PC-3 (cell line): ENCODE measurements at regions of chr7 and their contacts with region 1.

Region 1: DNA sequence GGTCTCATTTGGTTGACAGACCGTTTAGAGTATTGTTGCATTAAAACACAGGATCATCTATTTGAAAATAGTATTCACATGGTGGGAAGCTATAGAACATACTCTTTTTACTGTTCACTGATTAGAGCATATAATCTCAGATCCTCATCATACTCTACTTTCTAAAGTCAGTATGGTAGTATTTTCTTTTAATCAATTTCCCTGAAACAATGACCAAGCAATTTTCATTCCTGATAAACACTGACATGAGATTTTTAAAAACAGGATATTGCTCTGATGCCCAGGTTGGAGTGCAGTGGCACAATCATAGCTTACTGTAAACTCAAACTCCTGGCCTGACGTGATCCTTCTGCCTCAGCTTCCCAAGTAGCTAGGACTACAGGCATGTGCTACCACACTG is 63.9 kb downstream of the PTPN12 start:
- DNase-seq: no peak
- ATAC-seq: no peak
- H3K4me3 ChIP-seq: no peak overlapping the region
- H3K27ac ChIP-seq: no peak overlapping the region
- H3K4me1 ChIP-seq: no peaks in the 10 kb centered on the region
- H3K27me3 ChIP-seq: no peaks in the 10 kb centered on the region
- CTCF ChIP-seq: no peak

Region 2: DNA sequence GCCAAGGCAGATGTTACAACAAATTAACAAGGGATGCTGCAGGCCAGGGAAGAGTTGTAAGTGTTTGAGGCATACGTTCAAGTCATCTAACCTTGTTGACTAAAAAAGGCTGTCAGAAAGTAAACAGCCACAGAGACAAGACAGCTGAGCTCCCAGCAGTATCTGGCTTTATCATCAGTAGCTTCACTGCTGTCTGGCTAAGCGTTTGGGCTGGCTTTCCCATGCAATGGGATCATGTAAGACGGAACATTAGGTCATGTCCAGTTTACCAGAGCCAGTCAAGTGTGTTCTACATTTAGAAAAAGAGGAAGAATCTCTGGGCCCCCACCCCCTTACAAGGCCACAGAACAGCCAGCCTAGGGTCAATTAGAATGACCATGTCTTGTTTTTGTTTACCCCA is 133.5 kb before region 1 on chr7:
- CTCF ChIA-PET with region 1: no interaction called
- POLR2A ChIA-PET with region 1: interaction called, 17 read pairs
- intact Hi-C with region 1: no loop called
- DNase-seq: no peak
- ATAC-seq: no peak
- H3K4me3 ChIP-seq: no peak overlapping the region
- H3K27ac ChIP-seq: no peak overlapping the region
- H3K4me1 ChIP-seq: peaks cover 8% of the 10 kb centered on the region; the same call in 1 of the 2 replicates
- H3K27me3 ChIP-seq: no peaks in the 10 kb centered on the region
- CTCF ChIP-seq: no peak

Region 3: DNA sequence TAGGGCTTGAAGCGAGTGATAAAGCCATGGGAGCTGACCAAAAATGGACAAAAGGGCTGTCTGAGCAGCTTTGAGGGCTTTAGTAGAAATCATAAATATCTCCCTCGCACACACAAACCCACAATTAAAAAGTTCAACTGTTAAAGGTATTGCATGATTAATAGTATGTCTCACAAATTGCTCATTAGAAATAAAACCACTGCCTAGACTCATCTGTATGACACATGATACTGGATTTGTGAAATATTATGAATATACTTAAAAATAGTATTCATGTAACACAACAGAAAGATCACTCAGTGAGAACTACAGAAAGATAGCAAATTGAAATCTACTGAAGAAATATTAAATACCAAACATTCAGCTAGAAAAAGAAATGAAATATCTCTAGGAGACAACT is 75.7 kb before region 1 on chr7:
- CTCF ChIA-PET with region 1: no interaction called
- POLR2A ChIA-PET with region 1: no interaction called
- intact Hi-C with region 1: no loop called
- DNase-seq: peak; percentile 32
- ATAC-seq: peak; percentile 48
- H3K4me3 ChIP-seq: no peak overlapping the region
- H3K27ac ChIP-seq: 0 out of 2 replicates have a peak overlapping the region, but pooled peaks have one; percentile 6
- H3K4me1 ChIP-seq: peaks cover 20% of the 10 kb centered on the region
- H3K27me3 ChIP-seq: no peaks in the 10 kb centered on the region
- CTCF ChIP-seq: no peak